Activated CD4-positive, alpha-beta T cell treated with anti-CD3 and anti-CD28 coated beads, Interleukin-2, amount 10 ng/mL, durations not matched to agents 24 days and 14 days (primary cell): ENCODE measurements at regions of chr15 and their contacts with region 1.

Region 1: DNA sequence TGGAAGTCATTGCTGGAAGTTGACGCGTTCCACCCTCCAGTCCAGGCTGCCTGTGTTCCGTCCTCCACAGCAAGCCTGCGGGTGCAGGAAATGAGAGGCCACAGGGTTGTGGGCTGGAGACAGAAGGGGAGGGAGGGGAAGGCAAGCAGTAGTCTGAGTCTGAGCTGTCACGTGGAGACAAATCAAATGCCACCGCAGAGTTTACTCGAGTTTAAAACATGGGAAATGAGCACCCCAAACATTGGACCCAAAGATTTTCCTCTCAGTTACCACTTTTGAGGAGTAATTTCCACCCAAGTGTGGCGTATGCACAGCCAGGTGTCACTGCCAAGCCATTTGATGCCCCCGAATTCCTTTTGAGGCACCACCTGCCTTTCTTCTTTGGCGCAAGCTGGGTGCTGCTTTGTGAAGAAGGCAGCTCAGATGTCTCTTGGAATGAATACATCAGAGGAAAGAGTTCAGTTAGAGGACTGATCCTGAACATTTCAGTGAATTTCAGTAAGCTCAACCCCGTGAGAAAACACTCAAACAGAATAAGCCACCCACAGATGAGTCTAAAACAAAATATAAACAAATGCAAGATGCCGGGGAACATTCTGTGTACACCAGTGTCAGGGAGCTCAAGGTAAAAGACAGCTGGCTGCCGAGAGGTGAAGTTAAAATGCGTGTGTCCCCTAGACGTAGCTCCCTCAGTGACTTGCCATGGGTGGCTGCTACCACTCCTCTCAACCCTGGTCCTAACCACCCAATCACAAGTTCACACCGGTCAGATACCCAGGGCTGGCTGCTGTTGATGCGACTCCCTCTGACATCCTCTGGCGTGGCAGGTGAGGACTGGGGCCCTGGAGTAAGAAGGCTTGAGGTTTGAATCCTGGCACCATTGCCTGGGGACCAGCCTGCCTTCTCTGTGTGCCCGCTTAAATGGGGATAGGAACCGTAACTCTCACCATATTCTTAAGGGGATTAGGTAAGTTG is 203.8 kb downstream of the UACA start:
- DNase-seq: peak; percentile 90
- H3K4me3 Mint-ChIP-seq: no peak overlapping the region
- H3K27ac Mint-ChIP-seq: no peak overlapping the region
- H3K4me1 Mint-ChIP-seq: peaks cover 9% of the 10 kb centered on the region
- H3K27me3 Mint-ChIP-seq: peaks cover 30% of the 10 kb centered on the region

Region 2: GRCh38 chr15:70200511-70201424 is 358.8 kb before region 1 on chr15:
- intact Hi-C with region 1: no loop called
- DNase-seq: no peak
- H3K4me3 Mint-ChIP-seq: no peak overlapping the region
- H3K27ac Mint-ChIP-seq: no peak overlapping the region
- H3K4me1 Mint-ChIP-seq: no peaks in the 10 kb centered on the region
- H3K27me3 Mint-ChIP-seq: peaks cover 12% of the 10 kb centered on the region

Region 3: DNA sequence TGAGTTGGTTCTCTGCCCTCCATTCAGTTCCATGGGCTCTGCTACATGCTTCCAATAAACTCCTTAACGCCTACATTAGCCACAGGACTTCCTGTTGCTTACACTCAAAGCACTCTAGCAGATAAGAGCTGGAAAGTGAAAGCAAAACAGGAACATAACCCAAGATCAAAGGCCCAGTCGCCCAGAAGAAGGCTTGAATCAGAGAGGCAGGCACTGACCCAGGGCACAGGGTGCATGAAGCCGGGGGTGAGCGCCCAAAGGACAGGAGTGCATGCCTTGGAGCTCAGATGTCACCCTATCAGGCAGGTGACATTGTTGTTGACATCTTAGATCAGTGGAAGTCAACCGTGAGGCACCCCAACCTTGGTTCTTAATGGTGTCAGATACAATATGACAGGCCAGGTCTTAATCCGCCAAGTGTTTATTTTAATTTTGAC is 31.3 kb before region 1 on chr15:
- intact Hi-C with region 1: loop called (anchors 2 kb)
- DNase-seq: peak; percentile 92
- H3K4me3 Mint-ChIP-seq: peak overlapping the region; percentile 79
- H3K27ac Mint-ChIP-seq: peak overlapping the region; percentile 74
- H3K4me1 Mint-ChIP-seq: peaks cover 43% of the 10 kb centered on the region
- H3K27me3 Mint-ChIP-seq: peaks cover 5% of the 10 kb centered on the region